ENCODE measurements at regions of chr14 and their contacts with region 1.

Region 1: DNA sequence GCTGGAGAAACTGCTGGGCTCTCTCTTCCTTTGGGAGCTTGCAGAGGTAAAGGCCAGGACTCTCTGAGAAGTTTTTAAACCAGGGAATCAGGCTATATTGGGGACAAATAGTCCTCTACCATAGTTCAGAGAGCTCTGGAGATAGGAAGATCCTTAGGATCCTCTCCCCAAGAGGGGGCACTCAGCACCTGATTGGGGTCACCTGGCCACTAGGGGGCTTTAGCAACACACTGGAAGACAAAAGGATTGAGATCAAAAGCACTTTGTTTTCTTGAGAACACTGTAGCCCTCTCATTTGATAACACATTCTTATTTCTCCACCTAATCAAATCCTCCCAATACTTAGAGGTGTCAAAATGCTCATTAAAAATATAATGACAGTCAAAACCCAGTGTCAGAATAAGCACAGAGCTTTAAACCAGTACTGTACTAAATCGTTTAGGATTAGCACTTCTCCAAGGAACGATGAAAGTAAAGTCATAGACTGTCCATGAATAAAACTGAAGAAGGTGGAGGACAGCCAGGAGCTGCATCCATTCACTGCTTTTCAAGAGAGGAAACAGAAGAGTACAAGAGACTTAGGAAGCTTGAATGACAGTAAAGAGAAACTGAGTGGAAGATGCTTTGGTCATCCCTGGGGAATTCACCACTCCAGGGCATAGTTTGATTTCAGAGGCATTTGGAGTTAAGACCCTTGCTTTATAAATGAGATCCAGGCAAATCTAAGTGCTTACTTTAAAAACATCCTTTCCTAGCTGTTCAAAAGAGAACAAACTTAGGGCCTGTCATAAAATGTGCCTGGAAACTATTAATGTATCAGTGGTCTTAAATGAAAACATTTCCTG is 26.5 kb downstream of the BMP4 start:
- DNase-seq: no peak
- H3K4me3 ChIP-seq: no peak overlapping the region
- H3K27me3 ChIP-seq: no peaks in the 10 kb centered on the region; the same call in 1 of the 2 replicates
- CTCF ChIP-seq: peak; percentile 38

Region 2: GRCh38 chr14:53814392-53814791 is 115.7 kb before region 1 on chr14:
- CTCF ChIA-PET with region 1: no interaction called
- POLR2A ChIA-PET with region 1: no interaction called
- DNase-seq: peak; percentile 13
- H3K4me3 ChIP-seq: no peak overlapping the region
- H3K27me3 ChIP-seq: peaks cover 4% of the 10 kb centered on the region
- CTCF ChIP-seq: no peak

Region 3: DNA sequence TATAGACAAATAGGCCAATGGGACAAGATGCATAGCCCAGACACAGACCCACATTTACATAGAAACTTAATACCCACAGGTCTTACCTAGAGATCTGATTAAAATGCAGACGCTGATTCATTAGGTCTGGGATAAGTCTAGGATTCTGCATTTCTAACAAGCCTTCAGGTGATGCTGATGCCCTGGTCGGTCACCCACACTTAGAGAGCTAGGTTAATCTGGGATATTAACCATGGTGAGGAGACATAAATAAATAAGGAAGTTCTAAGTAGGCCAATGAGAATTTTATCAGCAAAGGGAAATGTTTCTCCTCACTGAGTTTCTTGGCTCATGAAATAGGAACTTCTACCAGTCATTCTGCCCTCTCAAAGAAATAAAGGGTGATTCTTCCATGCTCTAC is 93.5 kb before region 1 on chr14:
- CTCF ChIA-PET with region 1: no interaction called
- POLR2A ChIA-PET with region 1: no interaction called
- DNase-seq: no peak
- H3K4me3 ChIP-seq: no peak overlapping the region
- H3K27me3 ChIP-seq: 0 out of 2 replicates have a peak, but pooled peaks cover 2% of the 10 kb centered on the region
- CTCF ChIP-seq: no peak

Region 4: GRCh38 chr14:53943048-53943750 is 13.1 kb after region 1 on chr14:
- CTCF ChIA-PET with region 1: interaction called, 22 read pairs
- POLR2A ChIA-PET with region 1: no interaction called
- DNase-seq: no peak
- H3K4me3 ChIP-seq: no peak overlapping the region
- H3K27me3 ChIP-seq: peaks cover 2% of the 10 kb centered on the region; the same call in 1 of the 2 replicates
- CTCF ChIP-seq: no peak